Right cardiac atrium (tissue), 5 donors: ENCODE measurements at regions of chrX and their contacts with region 1.

Region 1: DNA sequence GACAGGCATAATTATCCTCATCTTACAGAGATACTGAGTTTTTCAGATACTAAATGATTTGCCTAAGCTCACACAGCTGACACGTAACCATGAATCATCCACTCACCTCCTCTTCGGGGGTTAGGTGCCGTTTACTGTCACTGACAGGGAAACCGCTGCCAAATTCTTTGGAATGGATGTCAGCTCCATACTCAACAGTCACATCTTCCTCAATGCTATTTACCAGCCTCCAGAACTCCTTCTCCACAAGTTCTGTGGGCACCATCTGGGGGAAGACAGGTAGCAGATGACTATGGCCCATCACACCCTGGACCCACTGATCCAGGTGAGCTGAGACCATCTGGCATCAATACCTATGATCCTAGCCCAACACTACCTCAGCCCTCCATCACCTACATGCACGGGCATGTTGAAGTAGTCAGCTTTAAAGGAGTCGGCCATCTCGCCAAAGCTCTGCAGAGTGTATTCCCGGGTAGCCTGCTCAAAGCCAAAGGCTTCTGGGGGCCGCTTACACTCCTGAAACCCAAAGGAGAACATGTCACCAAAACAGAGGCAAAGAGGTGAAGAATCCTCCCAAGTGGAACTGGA is 13.5 kb downstream of the KDM5C start:
- DNase-seq: no peak
- ATAC-seq: no peak
- H3K4me3 ChIP-seq: no peak overlapping the region
- H3K27ac ChIP-seq: no peak overlapping the region
- H3K4me1 ChIP-seq: no peaks in the 10 kb centered on the region
- H3K27me3 ChIP-seq: no peaks in the 10 kb centered on the region

Region 2: GRCh38 chrX:53190363-53190960 is 21.0 kb before region 1 on chrX:
- intact Hi-C with region 1: loop called in 1 of 4 experiments (anchors 2 kb)
- DNase-seq: no peak
- ATAC-seq: peak; percentile 17 to 24
- H3K4me3 ChIP-seq: no peak overlapping the region
- H3K27ac ChIP-seq: no peak overlapping the region
- H3K4me1 ChIP-seq: no peaks in the 10 kb centered on the region
- H3K27me3 ChIP-seq: no peaks in the 10 kb centered on the region